Astrocyte of the cerebellum (primary cell): ENCODE measurements at regions of chr9 and their contacts with region 1.

Region 1: DNA sequence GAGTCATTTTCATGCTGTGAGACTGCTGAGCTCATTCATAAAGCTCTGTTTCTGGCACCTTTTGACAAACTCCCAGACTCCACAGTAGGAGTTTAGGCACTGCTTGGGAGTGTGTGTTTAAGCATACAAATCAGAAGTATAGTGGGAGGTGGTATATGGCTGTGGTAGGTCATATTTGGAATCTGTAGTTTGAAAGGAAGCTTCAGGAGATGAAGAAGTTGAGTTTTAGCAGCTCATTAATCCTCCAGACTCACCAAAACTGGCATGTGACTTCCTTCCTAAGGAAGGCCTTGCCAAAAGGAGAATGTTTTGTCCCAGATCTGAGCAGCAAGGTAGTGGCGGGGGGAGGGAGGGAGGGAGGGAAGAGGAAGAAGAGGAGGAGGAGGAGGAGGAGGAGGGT is 52.8 kb downstream of the SAXO1 start:
- DNase-seq: no peak
- H3K4me3 ChIP-seq: no peak overlapping the region
- CTCF ChIP-seq: no peak

Region 2: DNA sequence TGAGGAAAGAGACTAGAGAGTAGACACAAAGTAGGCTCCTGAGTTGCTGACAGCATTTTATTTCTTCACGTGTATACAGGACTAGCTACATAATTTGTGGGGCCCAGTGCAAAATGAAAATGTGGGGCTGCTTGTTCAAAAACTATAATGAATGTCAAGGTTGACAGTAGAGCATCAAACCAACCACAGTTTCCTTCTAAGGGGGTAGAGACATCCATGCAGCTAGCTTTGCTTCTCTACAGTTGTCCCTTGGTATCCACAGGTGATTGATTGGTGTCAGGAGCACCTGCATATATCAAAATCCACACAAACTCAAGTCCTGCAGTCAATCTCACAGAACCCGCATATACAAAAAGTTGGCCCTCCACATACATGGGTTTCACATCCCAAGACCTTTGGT is 76.7 kb before region 1 on chr9:
- in situ Hi-C with region 1: loop called (anchors 5 kb)
- DNase-seq: no peak
- H3K4me3 ChIP-seq: no peak overlapping the region
- CTCF ChIP-seq: no peak

Region 3: GRCh38 chr9:19018201-19018600 is 38.0 kb after region 1 on chr9:
- in situ Hi-C with region 1: no loop called
- DNase-seq: no peak
- H3K4me3 ChIP-seq: no peak overlapping the region
- CTCF ChIP-seq: no peak